ENCODE measurements at regions of chr11 and their contacts with region 1.

Region 1: GRCh38 chr11:59197991-59198390 is 14.7 kb downstream of the MPEG1 start:
- DNase-seq: no peak
- ATAC-seq: no peak
- H3K4me3 ChIP-seq: no peak overlapping the region
- H3K4me3 Mint-ChIP-seq: peak overlapping the region; percentile 23
- H3K27ac ChIP-seq: no peak overlapping the region
- H3K27ac Mint-ChIP-seq: peak overlapping the region; percentile 72
- H3K4me1 ChIP-seq: peaks cover 47 to 50% of the 10 kb centered on the region in 2 donors
- H3K4me1 Mint-ChIP-seq: peaks cover 74% of the 10 kb centered on the region
- H3K27me3 ChIP-seq: no peaks in the 10 kb centered on the region
- H3K27me3 Mint-ChIP-seq: no peaks in the 10 kb centered on the region
- CTCF ChIP-seq: no peak

Region 2: GRCh38 chr11:59186130-59186594 is 11.8 kb before region 1 on chr11:
- CTCF ChIA-PET with region 1: interaction called, 52 read pairs
- POLR2A ChIA-PET with region 1: interaction called, 3 read pairs
- intact Hi-C with region 1: no loop called
- DNase-seq: peak; percentile 68
- ATAC-seq: peak; percentile 59
- H3K4me3 ChIP-seq: no peak overlapping the region
- H3K4me3 Mint-ChIP-seq: no peak overlapping the region
- H3K27ac ChIP-seq: no peak overlapping the region
- H3K27ac Mint-ChIP-seq: no peak overlapping the region
- H3K4me1 ChIP-seq: peaks cover 0 to 2% of the 10 kb centered on the region in 2 donors
- H3K4me1 Mint-ChIP-seq: peaks cover 20% of the 10 kb centered on the region
- H3K27me3 ChIP-seq: no peaks in the 10 kb centered on the region
- H3K27me3 Mint-ChIP-seq: no peaks in the 10 kb centered on the region
- CTCF ChIP-seq: peak; percentile 69

Measured in B cell (primary cell).